ENCODE measurements at regions of chr18 and their contacts with region 1.

Region 1: DNA sequence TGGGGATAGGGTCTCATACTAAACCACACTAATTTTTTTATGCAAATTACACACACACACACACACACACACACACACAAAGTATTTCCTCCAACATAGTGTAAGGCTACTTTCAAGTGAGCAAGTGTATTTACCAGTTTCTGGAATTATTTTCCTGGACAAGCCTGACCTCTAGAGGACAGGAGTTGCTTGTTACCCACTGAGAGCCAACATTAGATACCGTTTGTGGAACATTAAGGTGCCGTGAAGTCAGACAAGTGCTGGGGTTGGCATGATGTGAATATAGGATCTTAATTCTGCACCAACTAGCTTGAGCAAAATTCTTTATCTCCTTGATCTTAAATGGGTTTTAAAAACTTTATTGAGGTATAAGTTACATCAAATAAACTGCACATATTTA is 39.3 kb upstream of the SERPINB2 start:
- DNase-seq: no peak
- H3K4me3 ChIP-seq: no peak overlapping the region
- H3K27ac ChIP-seq: no peak overlapping the region
- H3K4me1 ChIP-seq: peaks cover 0 to 15% (median 0%) of the 10 kb centered on the region in 3 donors
- H3K27me3 ChIP-seq: no peaks in the 10 kb centered on the region
- CTCF ChIP-seq: peak in 5 of 6 experiments; percentile 45 to 77 (median 60)
- POLR2A ChIP-seq: no peak

Region 2: DNA sequence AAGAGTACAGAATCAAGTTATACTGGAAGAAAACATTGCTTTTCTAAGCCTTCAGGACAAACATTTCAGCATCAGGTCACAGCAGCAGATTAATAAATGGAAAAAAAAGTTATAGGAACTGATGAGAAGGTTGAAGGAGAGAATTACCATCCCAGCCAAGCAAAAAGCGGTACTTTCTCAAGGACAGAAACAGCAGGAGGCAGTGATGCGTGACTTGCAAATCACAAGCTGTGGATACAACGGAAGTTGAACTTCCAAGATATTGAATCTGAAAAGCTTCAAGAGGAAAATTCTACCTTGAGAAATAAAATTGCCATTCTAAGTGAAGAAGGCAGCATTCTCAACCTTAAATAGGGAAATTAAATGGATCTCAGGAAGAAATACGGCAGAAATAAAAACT is 324.5 kb before region 1 on chr18:
- intact Hi-C with region 1: loop called (anchors 10 kb)
- DNase-seq: no peak
- H3K4me3 ChIP-seq: no peak overlapping the region
- H3K27ac ChIP-seq: no peak overlapping the region
- H3K4me1 ChIP-seq: peaks cover 0 to 24% (median 0%) of the 10 kb centered on the region in 3 donors
- H3K27me3 ChIP-seq: no peaks in the 10 kb centered on the region
- CTCF ChIP-seq: no peak
- POLR2A ChIP-seq: no peak

Region 3: GRCh38 chr18:63741769-63742168 is 106.4 kb before region 1 on chr18:
- intact Hi-C with region 1: loop called (anchors 5 kb)
- DNase-seq: no peak
- H3K4me3 ChIP-seq: no peak overlapping the region
- H3K27ac ChIP-seq: no peak overlapping the region
- H3K4me1 ChIP-seq: peaks cover 0 to 15% (median 0%) of the 10 kb centered on the region in 3 donors
- H3K27me3 ChIP-seq: no peaks in the 10 kb centered on the region
- CTCF ChIP-seq: peak in 4 of 6 experiments; percentile 46 to 82 (median 56)
- POLR2A ChIP-seq: no peak

Region 4: DNA sequence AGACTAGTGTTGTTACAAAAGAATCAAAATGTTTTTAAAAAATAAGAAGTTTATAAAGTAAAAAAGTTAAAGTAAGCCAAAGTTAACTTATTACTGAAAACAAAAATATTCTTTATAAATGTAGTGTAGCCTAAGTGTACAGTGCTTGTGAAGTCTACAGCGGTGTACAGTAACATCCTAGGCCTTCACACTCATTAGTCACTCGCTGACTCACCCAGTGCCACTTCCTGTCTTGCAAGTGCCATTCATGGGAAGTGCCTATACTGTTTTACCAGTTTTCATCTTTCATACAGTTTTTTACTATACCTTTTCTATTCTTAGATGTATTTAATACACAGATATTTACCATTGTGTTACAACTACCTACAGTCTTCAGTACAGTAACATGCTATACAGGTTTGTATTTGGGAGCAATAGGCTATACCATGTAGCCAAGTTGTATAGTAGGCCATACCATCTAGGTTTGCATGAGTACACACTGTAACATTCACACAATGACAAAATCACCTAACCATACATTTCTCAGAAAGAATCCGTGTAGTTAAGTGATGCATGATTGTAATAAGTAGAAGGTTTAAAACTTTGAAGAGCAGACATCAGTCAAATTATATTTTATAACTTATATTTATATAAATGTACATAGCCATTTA is 59.6 kb before region 1 on chr18:
- intact Hi-C with region 1: no loop called
- DNase-seq: no peak
- H3K4me3 ChIP-seq: no peak overlapping the region
- H3K27ac ChIP-seq: peak overlapping the region in 1 of 4 donors; percentile 30
- H3K4me1 ChIP-seq: peaks cover 0 to 5% (median 4%) of the 10 kb centered on the region in 3 donors
- H3K27me3 ChIP-seq: no peaks in the 10 kb centered on the region
- CTCF ChIP-seq: no peak
- POLR2A ChIP-seq: no peak

Region 5: GRCh38 chr18:63936156-63936931 is 88.2 kb after region 1 on chr18:
- intact Hi-C with region 1: loop called (anchors 10 kb)
- DNase-seq: peak; percentile 48
- H3K4me3 ChIP-seq: peak overlapping the region; percentile 46 to 74 (median 54)
- H3K27ac ChIP-seq: peak overlapping the region in 3 of 4 donors; percentile 24 to 73 (median 44)
- H3K4me1 ChIP-seq: peaks cover 6 to 14% (median 8%) of the 10 kb centered on the region in 3 donors
- H3K27me3 ChIP-seq: peaks cover 0 to 22% (median 2%) of the 10 kb centered on the region in 4 donors
- CTCF ChIP-seq: peak; percentile 48 to 84 (median 74)
- POLR2A ChIP-seq: no peak